Transverse colon (tissue), 4 donors: ENCODE measurements at regions of chr10 and their contacts with region 1.

Region 1: GRCh38 chr10:84264611-84265141 is 19.8 kb downstream of the RGR start:
- DNase-seq: peak; percentile 70
- H3K4me3 ChIP-seq: no peak overlapping the region
- H3K27ac ChIP-seq: no peak overlapping the region
- H3K4me1 ChIP-seq: no peaks in the 10 kb centered on the region
- H3K27me3 ChIP-seq: no peaks in the 10 kb centered on the region
- CTCF ChIP-seq: peak; percentile 87 to 93 (median 91)
- EP300 ChIP-seq: no peak
- POLR2A ChIP-seq: no peak

Region 2: GRCh38 chr10:84375011-84375410 is 110.3 kb after region 1 on chr10:
- in situ Hi-C with region 1: no loop called
- intact Hi-C with region 1: loop called (anchors 1 kb)
- DNase-seq: no peak
- H3K4me3 ChIP-seq: no peak overlapping the region
- H3K27ac ChIP-seq: no peak overlapping the region
- H3K4me1 ChIP-seq: peaks cover 0 to 5% (median 1%) of the 10 kb centered on the region in 4 donors
- H3K27me3 ChIP-seq: no peaks in the 10 kb centered on the region
- CTCF ChIP-seq: peak; percentile 53 to 69 (median 65)
- EP300 ChIP-seq: no peak
- POLR2A ChIP-seq: no peak

Region 3: GRCh38 chr10:84531396-84531795 is 266.7 kb after region 1 on chr10:
- in situ Hi-C with region 1: loop called (anchors 5 to 10 kb)
- intact Hi-C with region 1: loop called (anchors 5 kb)
- DNase-seq: no peak
- H3K4me3 ChIP-seq: no peak overlapping the region
- H3K27ac ChIP-seq: no peak overlapping the region
- H3K4me1 ChIP-seq: no peaks in the 10 kb centered on the region
- H3K27me3 ChIP-seq: no peaks in the 10 kb centered on the region
- CTCF ChIP-seq: no peak
- EP300 ChIP-seq: no peak
- POLR2A ChIP-seq: no peak